ENCODE measurements at regions of chr9 and their contacts with region 1.

Region 1: GRCh38 chr9:106771631-106772030 is 91.3 kb upstream of the ZNF462 start:
- DNase-seq: no peak
- ATAC-seq: no peak
- H3K4me3 ChIP-seq: no peak overlapping the region
- H3K27ac ChIP-seq: no peak overlapping the region
- H3K4me1 ChIP-seq: no peaks in the 10 kb centered on the region
- H3K27me3 ChIP-seq: no peaks in the 10 kb centered on the region
- CTCF ChIP-seq: no peak
- EP300 ChIP-seq: no peak
- POLR2A ChIP-seq: no peak
- RAD21 ChIP-seq: no peak

Region 2: DNA sequence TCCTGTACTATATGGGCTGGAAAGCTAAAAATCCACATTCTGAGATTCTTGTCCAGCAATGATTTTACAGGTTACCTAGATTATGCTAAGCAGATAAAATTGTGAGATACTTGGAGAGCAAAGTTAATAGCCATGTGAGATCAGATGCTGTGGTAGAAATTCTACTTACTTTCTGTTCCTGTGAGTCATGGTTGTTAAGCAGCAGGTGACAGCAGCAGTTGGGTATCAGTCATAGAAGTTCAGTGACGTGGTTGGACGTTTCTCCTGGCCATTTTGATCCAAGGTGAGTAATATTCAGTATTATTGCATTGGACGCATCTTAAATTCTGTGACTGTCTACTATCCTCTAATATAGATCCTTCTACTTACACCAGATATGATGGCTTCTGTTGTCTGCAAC is 552.8 kb before region 1 on chr9:
- CTCF ChIA-PET with region 1: no interaction called
- POLR2A ChIA-PET with region 1: interaction called, 11 read pairs
- RAD21 ChIA-PET with region 1: no interaction called
- SMC1A ChIA-PET with region 1: no interaction called
- in situ Hi-C with region 1: no loop called
- intact Hi-C with region 1: no loop called
- DNase-seq: no peak
- ATAC-seq: peak; percentile 91
- H3K4me3 ChIP-seq: no peak overlapping the region
- H3K27ac ChIP-seq: no peak overlapping the region
- H3K4me1 ChIP-seq: no peaks in the 10 kb centered on the region
- H3K27me3 ChIP-seq: no peaks in the 10 kb centered on the region; a peak in 1 of 4 replicates
- CTCF ChIP-seq: no peak
- EP300 ChIP-seq: no peak
- POLR2A ChIP-seq: no peak
- RAD21 ChIP-seq: no peak

Region 3: DNA sequence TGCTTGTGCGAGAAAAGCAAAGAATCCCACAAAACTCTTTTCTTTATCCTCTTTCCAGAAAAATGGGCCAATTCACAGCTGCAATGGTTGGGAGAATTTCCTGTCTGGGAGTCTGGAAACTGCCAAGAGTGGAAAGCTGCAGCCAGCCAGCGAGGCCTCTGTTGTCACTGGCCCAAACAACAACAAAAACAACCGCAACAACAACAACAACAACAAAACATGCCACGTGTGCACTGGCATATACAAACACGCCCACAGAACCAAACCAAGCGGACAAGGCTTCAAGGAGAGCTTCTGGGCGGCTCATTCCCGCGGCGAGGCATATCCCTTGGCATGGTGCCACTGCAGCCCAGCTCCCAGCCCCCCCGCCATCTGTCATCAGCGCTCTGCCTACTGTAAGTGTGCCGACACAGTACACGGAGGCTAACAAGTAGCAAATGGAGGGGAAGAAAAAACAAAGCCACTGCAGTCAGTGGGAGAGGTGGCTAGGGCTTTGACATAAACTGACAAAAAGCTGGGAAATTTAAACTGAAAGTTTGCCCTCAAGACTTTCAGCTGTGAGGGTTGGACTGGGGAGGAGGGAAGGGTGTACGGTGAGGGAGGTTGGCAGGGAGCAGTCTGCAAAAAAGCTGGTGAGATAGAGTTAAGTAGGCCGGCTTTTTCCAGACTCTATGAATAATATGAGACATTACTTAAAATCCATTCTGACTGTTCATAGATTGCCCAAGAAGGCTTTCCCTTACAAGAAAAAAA is 73.7 kb before region 1 on chr9:
- CTCF ChIA-PET with region 1: no interaction called
- POLR2A ChIA-PET with region 1: no interaction called
- RAD21 ChIA-PET with region 1: no interaction called
- SMC1A ChIA-PET with region 1: no interaction called
- in situ Hi-C with region 1: no loop called
- intact Hi-C with region 1: no loop called
- DNase-seq: no peak
- ATAC-seq: no peak
- H3K4me3 ChIP-seq: no peak overlapping the region
- H3K27ac ChIP-seq: no peak overlapping the region
- H3K4me1 ChIP-seq: no peaks in the 10 kb centered on the region
- H3K27me3 ChIP-seq: no peaks in the 10 kb centered on the region
- CTCF ChIP-seq: no peak
- EP300 ChIP-seq: no peak
- POLR2A ChIP-seq: no peak
- RAD21 ChIP-seq: no peak

Measured in GM12878 (cell line).